Transverse colon (tissue), 4 donors: ENCODE measurements at regions of chrX and their contacts with region 1.

Region 1: DNA sequence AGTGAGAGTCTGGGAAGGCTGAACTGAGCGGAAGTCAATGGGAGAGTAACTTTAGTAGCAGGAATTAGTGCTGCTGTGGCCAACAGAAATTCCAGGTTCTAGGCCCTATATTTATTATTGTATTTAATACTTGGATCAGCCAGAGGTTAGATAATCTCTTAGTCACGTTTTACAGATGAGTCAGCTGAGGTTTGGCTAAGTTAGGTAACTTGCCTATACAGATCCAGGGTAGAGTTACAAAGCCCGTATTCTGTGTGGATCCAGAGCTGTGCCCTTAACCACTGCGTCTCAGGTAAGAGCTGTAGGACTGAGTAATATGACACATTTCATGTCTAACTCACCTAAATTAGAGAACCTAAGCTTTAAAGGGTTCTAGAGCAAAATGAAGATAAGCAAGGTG is 20.5 kb downstream of the PSMD10 start:
- DNase-seq: no peak
- H3K4me3 ChIP-seq: no peak overlapping the region
- H3K27ac ChIP-seq: no peak overlapping the region
- H3K4me1 ChIP-seq: no peaks in the 10 kb centered on the region
- H3K27me3 ChIP-seq: no peaks in the 10 kb centered on the region
- CTCF ChIP-seq: no peak
- EP300 ChIP-seq: no peak
- POLR2A ChIP-seq: no peak

Region 2: DNA sequence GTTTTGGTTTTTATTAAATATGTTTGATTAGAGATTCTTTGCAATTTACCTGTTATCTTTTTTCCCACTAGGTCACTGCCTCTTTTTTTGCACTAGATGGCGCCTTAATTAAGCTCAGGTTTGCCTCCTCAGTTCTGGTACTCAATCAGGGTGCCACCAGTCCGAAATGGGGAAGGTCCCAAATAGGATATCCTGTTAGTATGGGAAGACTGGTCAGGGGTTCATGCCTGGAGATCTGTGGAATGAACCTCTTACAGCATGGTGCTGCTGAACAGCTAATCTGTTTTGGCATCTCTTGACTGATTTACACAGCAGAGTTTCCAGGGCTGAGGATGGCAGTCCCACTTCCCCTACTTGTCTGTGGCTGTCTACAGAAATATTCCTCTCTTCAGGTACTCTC is 50.3 kb before region 1 on chrX:
- in situ Hi-C with region 1: loop called in 1 of 4 experiments (anchors 10 kb)
- intact Hi-C with region 1: no loop called
- DNase-seq: no peak
- H3K4me3 ChIP-seq: no peak overlapping the region
- H3K27ac ChIP-seq: no peak overlapping the region
- H3K4me1 ChIP-seq: no peaks in the 10 kb centered on the region
- H3K27me3 ChIP-seq: no peaks in the 10 kb centered on the region
- CTCF ChIP-seq: peak; percentile 23 to 53 (median 43)
- EP300 ChIP-seq: no peak
- POLR2A ChIP-seq: no peak

Region 3: DNA sequence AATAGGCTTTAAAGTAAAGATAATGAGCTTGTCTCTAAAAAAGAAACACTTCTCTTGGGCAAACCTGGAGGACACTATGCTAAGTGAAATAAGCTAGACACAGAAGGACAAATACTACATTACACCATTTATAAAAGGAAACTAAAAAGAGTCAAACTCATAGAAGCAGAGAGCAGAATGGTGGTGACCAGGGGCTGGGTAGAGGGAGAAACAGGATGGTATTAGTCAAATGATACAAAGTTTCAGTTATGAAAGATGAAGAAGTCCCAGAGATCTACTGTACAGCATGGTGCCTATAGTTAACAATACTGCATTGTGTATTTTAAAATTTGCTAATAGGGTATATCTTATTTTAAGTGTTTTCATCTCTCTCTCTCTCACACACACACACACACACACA is 1633.7 kb after region 1 on chrX:
- in situ Hi-C with region 1: no loop called
- intact Hi-C with region 1: no loop called
- DNase-seq: no peak
- H3K4me3 ChIP-seq: no peak overlapping the region
- H3K27ac ChIP-seq: no peak overlapping the region
- H3K4me1 ChIP-seq: no peaks in the 10 kb centered on the region
- H3K27me3 ChIP-seq: no peaks in the 10 kb centered on the region
- CTCF ChIP-seq: no peak
- EP300 ChIP-seq: no peak
- POLR2A ChIP-seq: no peak